ENCODE measurements at regions of chr6 and their contacts with region 1.

Region 1: DNA sequence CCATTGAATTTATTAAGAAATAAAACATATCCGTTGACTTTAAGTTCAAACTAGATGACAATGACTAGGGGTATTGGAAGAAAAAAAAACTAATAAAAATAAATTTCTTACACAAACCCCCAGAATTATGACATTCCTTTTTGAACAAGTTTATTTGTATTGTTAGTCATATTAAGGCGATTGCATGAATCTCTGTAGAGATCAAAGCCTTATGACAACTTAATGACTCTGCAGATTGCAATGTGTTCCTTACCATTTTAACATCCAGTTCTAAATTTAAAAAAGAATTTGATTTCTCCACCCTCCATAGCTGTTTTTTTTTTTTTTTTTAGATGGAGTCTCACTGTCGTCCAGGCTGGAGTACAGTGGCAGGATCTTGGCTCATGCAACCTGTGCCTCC is 189.8 kb upstream of the CEP162 start:
- DNase-seq: no peak
- H3K4me3 ChIP-seq: no peak overlapping the region
- H3K27ac ChIP-seq: no peak overlapping the region
- H3K4me1 ChIP-seq: peaks cover 0 to 46% (median 18%) of the 10 kb centered on the region in 4 donors
- H3K27me3 ChIP-seq: no peaks in the 10 kb centered on the region
- CTCF ChIP-seq: no peak

Region 2: GRCh38 chr6:85323435-85324040 is 906.3 kb after region 1 on chr6:
- intact Hi-C with region 1: loop called (anchors 5 kb)
- DNase-seq: peak; percentile 81 to 83
- H3K4me3 ChIP-seq: no peak overlapping the region
- H3K27ac ChIP-seq: peak overlapping the region in 1 of 2 donors; percentile 13
- H3K4me1 ChIP-seq: peaks cover 0 to 21% (median 0%) of the 10 kb centered on the region in 4 donors
- H3K27me3 ChIP-seq: no peaks in the 10 kb centered on the region
- CTCF ChIP-seq: peak; percentile 79 to 87